Heart left ventricle (tissue), 16 donors: ENCODE measurements at regions of chr4 and their contacts with region 1.

Region 1: DNA sequence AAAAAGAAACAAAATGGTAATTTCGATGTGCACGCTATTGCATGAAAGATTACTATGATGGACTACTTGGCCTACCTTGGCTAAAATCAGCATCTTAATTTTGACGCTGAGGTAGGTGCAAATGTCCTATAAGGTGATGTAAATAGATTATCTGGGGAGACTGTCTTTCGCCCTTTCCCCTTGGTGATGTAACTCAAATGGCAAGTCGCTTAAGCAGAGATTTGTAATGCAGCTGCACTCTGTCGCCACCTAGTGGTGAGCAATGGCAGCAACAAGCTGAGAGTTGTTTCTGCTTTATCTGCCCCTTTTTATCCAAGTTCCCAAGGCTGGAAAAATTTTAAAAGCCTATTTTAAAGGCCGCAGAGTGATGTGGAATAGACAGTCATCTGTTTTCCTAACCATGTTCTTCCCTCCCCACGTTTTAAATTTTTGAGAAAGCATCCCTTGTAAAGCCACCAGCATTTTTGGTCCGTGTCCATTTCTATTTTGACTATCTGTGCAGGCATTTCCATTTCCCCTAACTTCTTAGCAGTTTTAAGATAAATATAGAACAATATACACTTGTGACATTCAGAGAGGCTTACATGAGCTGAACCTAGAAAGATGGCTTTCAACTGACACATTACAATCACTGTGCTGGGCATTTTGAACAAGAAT is 62.4 kb upstream of the PDLIM3 start:
- DNase-seq: peak; percentile 71 to 82 (median 74)
- ATAC-seq: peak in 3 of 4 donors; percentile 33 to 54 (median 38)
- H3K4me3 ChIP-seq: no peak overlapping the region
- H3K27ac ChIP-seq: peak overlapping the region in 10 of 12 donors; percentile 6 to 79 (median 43)
- H3K4me1 ChIP-seq: peaks cover 0 to 49% (median 20%) of the 10 kb centered on the region in 12 donors
- H3K27me3 ChIP-seq: no peaks in the 10 kb centered on the region
- CTCF ChIP-seq: peak; percentile 96 to 100 (median 99)
- POLR2A ChIP-seq: no peak

Region 2: GRCh38 chr4:184889666-184890335 is 707.9 kb before region 1 on chr4:
- intact Hi-C with region 1: no loop called
- DNase-seq: no peak
- ATAC-seq: peak in 2 of 4 donors; percentile 7 to 16
- H3K4me3 ChIP-seq: no peak overlapping the region
- H3K27ac ChIP-seq: no peak overlapping the region
- H3K4me1 ChIP-seq: peaks cover 0 to 15% (median 0%) of the 10 kb centered on the region in 12 donors
- H3K27me3 ChIP-seq: no peaks in the 10 kb centered on the region
- CTCF ChIP-seq: no peak
- POLR2A ChIP-seq: no peak

Region 3: GRCh38 chr4:185209031-185209851 is 388.4 kb before region 1 on chr4 and contains the start of gene SNX25:
- intact Hi-C with region 1: loop called in 2 of 10 experiments (anchors 10 kb)
- DNase-seq: peak; percentile 89 to 93 (median 91)
- ATAC-seq: peak; percentile 88 to 97 (median 96)
- H3K4me3 ChIP-seq: peak within 1 kb of the TSS; percentile 58 to 83 (median 70)
- H3K27ac ChIP-seq: peak within 1 kb of the TSS; percentile 76 to 92 (median 86)
- H3K4me1 ChIP-seq: peaks cover 4 to 42% (median 26%) of the 10 kb centered on the region in 12 donors
- H3K27me3 ChIP-seq: peaks cover 0 to 7% (median 0%) of the 10 kb centered on the region in 9 donors
- CTCF ChIP-seq: peak in 6 of 12 donors; percentile 18 to 44 (median 30)
- POLR2A ChIP-seq: peak; percentile 76 to 93
- total RNA-seq, gene SNX25: 7.5 to 12.4 (median 10.7) TPM

Region 4: GRCh38 chr4:185395956-185396723 is 201.5 kb before region 1 on chr4:
- intact Hi-C with region 1: loop called in 1 of 10 experiments (anchors 10 kb)
- DNase-seq: peak; percentile 96 to 99 (median 97)
- ATAC-seq: peak; percentile 92 to 98 (median 96)
- H3K4me3 ChIP-seq: peak overlapping the region; percentile 64 to 88 (median 77)
- H3K27ac ChIP-seq: peak overlapping the region; percentile 98 to 100 (median 100)
- H3K4me1 ChIP-seq: peaks cover 0 to 46% (median 26%) of the 10 kb centered on the region in 12 donors
- H3K27me3 ChIP-seq: no peaks in the 10 kb centered on the region
- CTCF ChIP-seq: peak in 2 of 12 donors; percentile 10 to 17
- POLR2A ChIP-seq: peak in 1 of 2 donors; percentile 67

Region 5: GRCh38 chr4:185471235-185472102 is 126.2 kb before region 1 on chr4 and contains the start of gene CCDC110:
- intact Hi-C with region 1: loop called (anchors 1 to 5 kb)
- DNase-seq: peak; percentile 92 to 98 (median 97)
- ATAC-seq: peak; percentile 96 to 99 (median 98)
- H3K4me3 ChIP-seq: peak within 1 kb of the TSS; percentile 68 to 97 (median 88)
- H3K27ac ChIP-seq: peak within 1 kb of the TSS in 11 of 12 donors; percentile 17 to 83 (median 57)
- H3K4me1 ChIP-seq: peaks cover 0 to 17% (median 6%) of the 10 kb centered on the region in 12 donors
- H3K27me3 ChIP-seq: peaks cover 0 to 11% (median 0%) of the 10 kb centered on the region in 9 donors
- CTCF ChIP-seq: peak; percentile 46 to 96 (median 78)
- POLR2A ChIP-seq: peak in 1 of 2 donors; percentile 51
- total RNA-seq, gene CCDC110: 0.62 to 2.6 (median 1.1) TPM

Region 6: GRCh38 chr4:185640811-185641675 is 43.4 kb after region 1 on chr4:
- intact Hi-C with region 1: no loop called
- DNase-seq: no peak
- ATAC-seq: no peak
- H3K4me3 ChIP-seq: no peak overlapping the region
- H3K27ac ChIP-seq: peak overlapping the region in 2 of 12 donors; percentile 17 to 63
- H3K4me1 ChIP-seq: peaks cover 0 to 14% (median 1%) of the 10 kb centered on the region in 12 donors
- H3K27me3 ChIP-seq: peaks cover 0 to 5% (median 0%) of the 10 kb centered on the region in 9 donors
- CTCF ChIP-seq: peak in 11 of 12 donors; percentile 31 to 69 (median 52)
- POLR2A ChIP-seq: no peak

Region 7: GRCh38 chr4:185656467-185656931 is 58.8 kb after region 1 on chr4:
- intact Hi-C with region 1: no loop called
- DNase-seq: peak in 4 of 5 donors; percentile 42 to 71 (median 55)
- ATAC-seq: peak; percentile 39 to 78 (median 53)
- H3K4me3 ChIP-seq: peak overlapping the region in 10 of 12 donors; percentile 14 to 58 (median 41)
- H3K27ac ChIP-seq: peak overlapping the region; percentile 30 to 87 (median 66)
- H3K4me1 ChIP-seq: peaks cover 0 to 60% (median 14%) of the 10 kb centered on the region in 12 donors
- H3K27me3 ChIP-seq: no peaks in the 10 kb centered on the region
- CTCF ChIP-seq: peak in 10 of 12 donors; percentile 10 to 58 (median 34)
- POLR2A ChIP-seq: no peak